Adrenal gland (tissue), 19 donors: ENCODE measurements at regions of chr19 and their contacts with region 1.

Region 1: DNA sequence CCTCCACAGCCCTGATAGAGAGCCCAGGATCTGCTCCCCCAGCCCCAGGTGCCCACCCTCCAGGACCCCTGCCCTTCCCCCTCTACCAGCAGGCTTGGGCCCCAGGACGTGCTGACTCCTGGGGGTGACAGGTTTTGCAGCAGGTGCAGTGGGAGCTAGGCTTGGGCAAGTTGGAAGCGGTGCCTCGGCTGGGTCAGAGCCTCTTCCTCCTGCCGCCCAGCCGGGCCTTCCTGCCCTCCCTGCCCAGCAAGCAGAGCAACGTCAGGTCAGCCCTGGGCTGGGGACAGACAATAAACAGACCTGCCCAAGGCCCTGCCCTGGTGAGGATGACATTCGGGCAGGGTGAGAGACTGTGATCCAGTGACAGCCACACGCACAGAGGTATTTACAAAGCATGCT is 9.2 kb upstream of the NCCRP1 start:
- DNase-seq: no peak
- H3K4me3 ChIP-seq: no peak overlapping the region
- H3K27ac ChIP-seq: no peak overlapping the region
- H3K4me1 ChIP-seq: no peaks in the 10 kb centered on the region
- H3K27me3 ChIP-seq: no peaks in the 10 kb centered on the region
- CTCF ChIP-seq: peak in 2 of 6 experiments; percentile 14 to 22
- POLR2A ChIP-seq: no peak

Region 2: DNA sequence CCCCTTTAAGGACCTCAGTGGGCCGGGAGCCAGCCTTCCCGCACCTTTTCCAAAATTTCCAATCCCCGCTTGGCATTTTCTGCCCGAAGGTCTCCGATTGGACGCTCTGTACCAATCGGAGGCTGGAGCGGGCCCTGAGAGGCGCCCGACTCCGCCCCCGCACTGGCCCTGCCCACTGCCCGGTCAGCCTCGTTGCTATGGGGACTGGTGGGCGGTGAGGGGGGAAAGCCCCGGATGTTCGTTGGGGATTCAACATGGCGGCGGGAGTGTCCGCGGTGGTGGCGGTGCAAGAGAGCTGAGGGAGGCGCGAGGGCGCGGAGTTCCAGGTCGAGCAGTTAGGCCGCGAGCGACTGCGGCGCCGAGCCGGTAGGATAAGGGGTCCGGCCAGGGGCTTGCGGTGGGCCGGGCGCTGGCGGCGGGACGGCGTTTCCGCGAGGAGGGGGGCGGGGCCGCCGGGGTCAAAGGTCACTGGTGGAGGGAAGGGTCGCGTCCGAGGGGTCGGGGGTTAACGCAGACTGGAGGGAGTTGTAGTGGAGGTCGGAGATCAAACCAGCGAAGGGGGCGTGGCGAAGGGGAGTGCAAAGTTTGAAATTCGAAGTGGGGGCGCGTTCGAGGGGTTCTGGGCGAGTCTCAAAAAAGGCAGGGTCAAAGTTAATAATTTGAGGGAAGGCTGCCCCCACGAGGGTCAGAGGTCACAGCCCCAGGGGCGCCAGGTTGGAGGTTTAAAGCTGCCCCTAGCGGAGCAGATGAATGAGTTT is 61.8 kb before region 1 on chr19 and contains the start of gene PAK4:
- intact Hi-C with region 1: loop called (anchors 5 kb)
- DNase-seq: peak; percentile 97 to 99 (median 98)
- H3K4me3 ChIP-seq: peak within 1 kb of the TSS; percentile 66 to 98 (median 87)
- H3K27ac ChIP-seq: peak within 1 kb of the TSS; percentile 30 to 82 (median 57)
- H3K4me1 ChIP-seq: peaks cover 18 to 40% of the 10 kb centered on the region in 2 donors
- H3K27me3 ChIP-seq: no peaks in the 10 kb centered on the region
- CTCF ChIP-seq: no peak
- POLR2A ChIP-seq: peak; percentile 29 to 46
- total RNA-seq, gene PAK4: 7.5 to 61.0 (median 20.1) TPM

Region 3: DNA sequence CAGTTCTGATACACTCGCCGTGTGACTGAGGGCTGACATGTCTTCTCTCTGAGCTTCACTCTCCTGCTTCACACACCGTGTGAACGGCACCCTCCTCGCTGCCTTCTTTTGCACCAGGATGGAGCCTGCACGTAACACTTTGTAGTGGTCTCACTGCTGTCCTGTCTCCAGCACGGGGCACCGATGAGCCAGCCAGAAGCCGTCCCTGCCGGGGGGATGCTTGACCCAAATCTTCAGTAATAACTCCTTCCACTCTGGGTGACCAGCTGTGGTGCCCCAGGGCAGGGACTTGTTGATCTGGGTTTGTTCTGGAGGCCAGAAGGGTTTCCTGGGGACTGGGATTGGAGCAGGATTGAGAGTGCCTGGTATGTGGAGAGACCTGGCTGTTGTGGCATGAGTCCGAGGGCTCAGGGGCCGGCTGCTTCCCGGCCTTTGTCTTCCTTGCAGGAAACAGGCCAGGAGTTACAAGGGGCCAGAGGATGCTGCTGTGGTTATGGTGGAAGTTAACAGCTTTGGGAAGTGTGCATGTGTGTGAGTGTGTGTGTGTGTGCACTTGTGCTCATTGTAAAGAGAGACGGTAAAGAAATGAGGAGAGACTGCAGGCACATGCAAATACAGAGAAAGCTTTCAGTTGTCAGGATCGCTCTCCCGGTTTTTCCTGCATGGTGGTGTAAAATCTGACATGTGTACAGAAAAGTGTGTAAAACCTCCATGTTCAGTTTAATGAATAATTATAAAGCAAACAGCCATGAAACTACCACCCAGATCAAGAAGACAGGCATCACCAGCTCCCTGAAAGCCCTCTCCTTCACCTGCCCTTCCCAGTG is 43.1 kb before region 1 on chr19:
- intact Hi-C with region 1: no loop called
- DNase-seq: peak in 2 of 7 donors; percentile 45 to 63
- H3K4me3 ChIP-seq: no peak overlapping the region
- H3K27ac ChIP-seq: peak overlapping the region in 2 of 5 donors; percentile 31 to 47
- H3K4me1 ChIP-seq: peaks cover 6 to 30% of the 10 kb centered on the region in 2 donors
- H3K27me3 ChIP-seq: no peaks in the 10 kb centered on the region
- CTCF ChIP-seq: no peak
- POLR2A ChIP-seq: no peak